H1 (cell line): ENCODE measurements at regions of chr17 and their contacts with region 1.

Region 1: GRCh38 chr17:7004398-7005253 is 7.8 kb upstream of the RNASEK start:
- DNase-seq: peak in 1 of 2 experiments; percentile 53
- H3K4me3 ChIP-seq: no peak overlapping the region
- H3K27ac ChIP-seq: no peak overlapping the region
- H3K4me1 ChIP-seq: no peaks in the 10 kb centered on the region
- H3K27me3 ChIP-seq: no peaks in the 10 kb centered on the region
- CTCF ChIP-seq: peak in 2 of 3 experiments; percentile 70; a peak in 3 of 4 replicates
- EP300 ChIP-seq: no peak
- POLR2A ChIP-seq: no peak
- RAD21 ChIP-seq: peak; percentile 82 to 88

Region 2: GRCh38 chr17:6919158-6919557 is 85.5 kb before region 1 on chr17:
- CTCF ChIA-PET with region 1: interaction called, 152 read pairs
- POLR2A ChIA-PET with region 1: interaction called, 4 read pairs
- DNase-seq: no peak
- H3K4me3 ChIP-seq: no peak overlapping the region
- H3K27ac ChIP-seq: no peak overlapping the region
- H3K4me1 ChIP-seq: no peaks in the 10 kb centered on the region
- H3K27me3 ChIP-seq: no peaks in the 10 kb centered on the region
- CTCF ChIP-seq: no peak
- EP300 ChIP-seq: no peak
- POLR2A ChIP-seq: no peak
- RAD21 ChIP-seq: no peak

Region 3: DNA sequence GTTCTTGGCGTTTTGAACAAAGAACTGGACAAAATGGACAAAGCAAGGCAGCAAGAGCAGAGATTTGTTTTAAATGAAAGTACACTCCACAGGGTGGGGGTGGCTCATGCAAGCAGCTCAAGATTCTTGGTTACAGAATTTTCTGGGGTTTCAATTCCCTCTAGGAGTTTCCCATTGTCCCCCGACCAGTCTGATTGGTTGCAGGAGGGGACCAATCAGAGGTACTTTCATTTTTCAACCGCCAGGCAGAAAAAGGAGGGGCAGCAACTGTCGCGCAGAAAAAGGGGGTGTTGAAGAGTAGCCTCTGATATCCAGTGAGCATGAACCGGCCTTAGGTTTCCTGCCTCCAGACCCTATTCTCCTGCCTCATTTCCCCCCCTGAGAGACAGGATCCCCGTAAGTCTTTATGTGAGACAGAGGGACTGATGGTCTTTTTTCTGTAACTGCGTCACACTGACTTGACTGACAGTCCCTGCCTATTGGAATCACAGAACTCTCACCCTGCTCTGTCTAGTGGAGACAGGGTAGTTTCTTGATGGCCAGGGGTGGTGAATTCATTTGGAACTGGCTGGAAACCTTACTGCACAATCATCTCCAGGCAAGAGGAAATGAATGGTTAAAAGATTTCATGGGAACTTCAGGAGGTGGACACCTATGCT is 68.1 kb before region 1 on chr17:
- CTCF ChIA-PET with region 1: interaction called, 16 read pairs
- POLR2A ChIA-PET with region 1: no interaction called
- DNase-seq: no peak
- H3K4me3 ChIP-seq: peak overlapping the region in 1 of 4 experiments; percentile 42; a peak in 1 of 8 replicates
- H3K27ac ChIP-seq: no peak overlapping the region
- H3K4me1 ChIP-seq: peaks cover 0 to 3% (median under 1%) of the 10 kb centered on the region in 4 experiments; a peak in 1 of 7 replicates
- H3K27me3 ChIP-seq: no peaks in the 10 kb centered on the region; a peak in 1 of 7 replicates
- CTCF ChIP-seq: no peak
- EP300 ChIP-seq: no peak
- POLR2A ChIP-seq: no peak
- RAD21 ChIP-seq: no peak

Region 4: DNA sequence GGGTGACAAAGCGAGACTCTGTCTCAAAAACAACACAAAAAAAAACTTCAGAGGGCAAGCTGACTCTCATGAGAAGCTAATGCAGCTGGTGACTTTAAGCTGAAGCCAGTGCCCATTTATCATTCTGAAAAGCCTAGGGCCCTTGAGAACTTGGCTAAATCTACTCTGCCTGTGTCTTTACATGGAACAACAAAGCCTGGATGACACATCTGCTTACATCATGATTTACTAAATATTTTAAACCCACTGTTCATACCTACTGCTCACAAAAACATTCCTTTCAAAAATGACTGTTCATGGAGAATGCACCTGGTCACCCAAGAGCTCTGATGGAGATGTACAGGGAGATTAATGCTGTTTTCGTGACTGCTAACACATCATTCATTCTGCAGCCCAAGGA is 14.8 kb before region 1 on chr17:
- CTCF ChIA-PET with region 1: interaction called, 16 read pairs
- POLR2A ChIA-PET with region 1: interaction called, 3 read pairs
- DNase-seq: no peak
- H3K4me3 ChIP-seq: no peak overlapping the region
- H3K27ac ChIP-seq: no peak overlapping the region
- H3K4me1 ChIP-seq: no peaks in the 10 kb centered on the region
- H3K27me3 ChIP-seq: peaks cover 0 to 15% (median 9%) of the 10 kb centered on the region in 4 experiments; a peak in 6 of 7 replicates
- CTCF ChIP-seq: no peak
- EP300 ChIP-seq: no peak
- POLR2A ChIP-seq: no peak
- RAD21 ChIP-seq: no peak

Region 5: GRCh38 chr17:7060165-7060891 is 55.7 kb after region 1 on chr17:
- CTCF ChIA-PET with region 1: no interaction called
- POLR2A ChIA-PET with region 1: no interaction called
- DNase-seq: no peak
- H3K4me3 ChIP-seq: no peak overlapping the region
- H3K27ac ChIP-seq: no peak overlapping the region
- H3K4me1 ChIP-seq: no peaks in the 10 kb centered on the region; a peak in 1 of 7 replicates
- H3K27me3 ChIP-seq: no peaks in the 10 kb centered on the region
- CTCF ChIP-seq: no peak
- EP300 ChIP-seq: no peak
- POLR2A ChIP-seq: no peak
- RAD21 ChIP-seq: no peak